Posterior cingulate gyrus (tissue), 11 donors: ENCODE measurements at regions of chr20 and their contacts with region 1.

Region 1: DNA sequence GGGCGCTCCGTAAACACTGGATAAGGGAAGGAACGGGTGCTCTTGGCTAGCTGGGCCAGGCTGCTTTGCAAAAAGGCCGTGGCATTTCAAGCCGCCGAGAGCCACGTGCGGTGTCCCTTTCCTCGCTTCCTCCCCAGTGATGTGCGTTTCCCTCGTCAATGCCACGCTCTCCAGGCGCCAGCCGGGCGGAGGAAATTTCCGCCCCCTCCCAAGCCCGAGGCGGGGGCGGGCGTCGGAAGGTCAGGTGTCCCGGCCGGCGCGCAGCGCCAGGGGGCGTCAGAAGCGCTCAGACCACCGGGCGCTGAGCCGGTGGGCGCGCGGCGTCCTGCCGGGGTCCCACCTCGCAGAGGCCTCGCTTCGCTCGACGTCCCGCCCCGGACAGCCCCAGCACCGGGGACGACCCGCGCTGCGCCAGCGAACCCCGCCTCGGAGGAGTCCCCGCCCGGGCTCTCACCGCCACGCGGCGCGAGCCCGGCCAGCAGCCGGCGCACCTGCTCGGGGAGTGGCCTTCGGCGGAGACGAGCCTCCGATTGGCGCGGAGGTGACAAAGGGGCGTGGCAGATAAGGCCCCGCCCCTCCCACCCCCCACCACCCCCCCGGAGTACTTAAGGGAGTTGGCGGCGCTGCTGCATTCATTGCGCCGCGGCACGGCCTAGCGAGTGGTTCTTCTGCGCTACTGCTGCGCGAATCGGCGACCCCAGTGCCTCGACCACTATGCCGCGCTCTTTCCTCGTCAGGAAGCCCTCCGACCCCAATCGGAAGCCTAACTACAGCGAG is at the start of gene SNAI1:
- DNase-seq: peak; percentile 67 to 98 (median 84)

Region 2: GRCh38 chr20:50070991-50071888 is 88.7 kb after region 1 on chr20:
- intact Hi-C with region 1: loop called (anchors 1 kb)
- DNase-seq: peak; percentile 79 to 98 (median 95)

Region 3: DNA sequence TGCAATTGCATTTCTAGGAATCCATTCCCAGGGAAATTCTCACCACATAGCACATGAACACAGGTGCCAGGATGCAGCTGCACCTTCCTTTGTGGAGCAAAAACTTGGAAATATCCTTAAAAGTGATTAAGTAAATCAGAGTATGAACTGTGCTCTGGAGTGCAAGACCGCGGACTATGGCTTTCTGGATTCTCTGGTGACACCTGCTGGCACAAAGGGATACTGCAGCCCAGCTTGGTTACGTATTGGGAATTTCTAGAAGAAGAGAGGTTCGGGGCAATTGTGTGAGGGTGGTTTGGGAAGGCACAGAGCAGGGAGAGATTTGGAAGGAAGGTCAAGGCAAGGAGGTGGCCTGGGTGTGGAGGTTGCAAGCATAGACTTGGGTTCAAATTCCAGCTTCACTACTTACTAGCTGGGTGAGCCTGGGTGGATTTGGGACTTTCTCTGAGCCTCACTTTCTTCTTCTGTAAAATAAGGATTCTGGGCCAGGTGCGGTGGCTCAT is 186.8 kb after region 1 on chr20:
- intact Hi-C with region 1: loop called (anchors 10 kb)
- DNase-seq: peak in 9 of 10 donors; percentile 50 to 95 (median 80)